Lower lobe of right lung (tissue), 2 donors: ENCODE measurements at regions of chr1 and their contacts with region 1.

Region 1: GRCh38 chr1:50605186-50605875 is 182.1 kb upstream of the DMRTA2 start:
- DNase-seq: no peak
- ATAC-seq: peak; percentile 76 to 83
- H3K4me3 ChIP-seq: no peak overlapping the region
- H3K27ac ChIP-seq: no peak overlapping the region
- H3K4me1 ChIP-seq: peaks cover 5% of the 10 kb centered on the region
- H3K27me3 ChIP-seq: no peaks in the 10 kb centered on the region
- CTCF ChIP-seq: peak; percentile 32

Region 2: DNA sequence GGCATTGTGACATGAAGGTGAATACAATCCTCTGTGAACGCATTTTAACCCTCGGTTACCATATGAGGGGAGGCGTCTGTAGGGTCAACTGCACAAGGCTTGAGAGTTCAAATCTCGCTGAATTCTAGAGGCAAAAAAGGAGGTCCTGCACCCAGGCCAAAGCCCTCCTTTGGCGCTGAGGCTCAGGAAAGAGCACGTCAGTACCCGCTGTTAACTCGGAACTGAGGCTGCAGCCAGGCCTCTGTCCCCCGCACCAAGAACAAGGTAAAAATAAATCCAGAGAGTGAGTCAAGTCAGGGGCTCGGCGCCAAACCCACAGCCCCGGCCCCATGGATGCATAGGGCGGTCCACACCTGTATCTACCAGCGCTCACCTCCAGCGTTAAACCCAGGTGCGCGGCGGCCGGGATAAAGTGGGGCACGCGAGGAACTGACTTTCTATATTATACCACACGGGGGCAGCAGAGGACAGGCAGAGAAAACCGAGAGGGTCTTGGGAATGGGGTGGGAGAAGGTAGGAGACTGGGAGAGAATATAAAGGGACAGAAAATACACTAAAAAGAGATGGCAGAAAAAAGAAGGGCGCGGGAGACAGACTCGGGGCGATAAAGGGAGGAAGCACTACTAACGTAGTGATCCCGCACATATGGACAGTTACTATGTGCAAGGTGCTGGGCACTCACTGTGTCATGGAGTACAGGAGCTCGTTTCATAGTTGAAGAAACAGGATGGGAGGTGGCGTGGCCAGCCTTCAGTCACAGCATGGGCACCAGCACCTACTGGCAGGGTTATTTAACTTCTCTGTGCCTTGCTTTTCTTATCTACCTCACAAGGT is 236.9 kb before region 1 on chr1:
- intact Hi-C with region 1: loop called (anchors 10 kb)
- DNase-seq: no peak
- ATAC-seq: peak; percentile 78 to 79
- H3K4me3 ChIP-seq: no peak overlapping the region
- H3K27ac ChIP-seq: no peak overlapping the region
- H3K4me1 ChIP-seq: peaks cover 8% of the 10 kb centered on the region
- H3K27me3 ChIP-seq: peaks cover 18% of the 10 kb centered on the region
- CTCF ChIP-seq: peak; percentile 77